Activated CD4-positive, alpha-beta memory T cell treated with anti-CD3 and anti-CD28 coated beads for 36 hours (primary cell): ENCODE measurements at regions of chr2 and their contacts with region 1.

Region 1: GRCh38 chr2:181104512-181105115 is 124.2 kb downstream of the UBE2E3 start:
- DNase-seq: no peak
- H3K4me3 Mint-ChIP-seq: no peak overlapping the region
- H3K27ac Mint-ChIP-seq: no peak overlapping the region
- H3K4me1 Mint-ChIP-seq: peaks cover 44% of the 10 kb centered on the region
- H3K27me3 Mint-ChIP-seq: no peaks in the 10 kb centered on the region

Region 2: DNA sequence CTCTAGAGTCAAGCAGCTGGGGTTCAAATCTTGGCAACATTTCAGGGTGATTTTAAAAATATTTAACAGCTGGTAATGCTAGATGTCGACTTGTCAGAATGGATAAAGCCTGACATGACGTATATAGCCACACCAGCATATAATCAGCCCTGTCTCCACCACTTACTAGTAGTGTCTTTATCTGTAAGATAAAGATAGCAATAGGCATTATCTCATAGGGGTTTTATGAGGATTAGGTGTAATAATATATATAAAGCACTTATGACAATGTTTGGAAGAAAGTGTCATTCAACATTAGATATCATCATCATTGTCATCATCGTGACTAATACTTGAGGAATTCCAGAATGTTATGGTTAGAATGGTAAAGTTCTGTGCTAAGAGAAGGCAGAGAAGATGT is 728.5 kb before region 1 on chr2:
- CTCF ChIA-PET with region 1: no interaction called
- POLR2A ChIA-PET with region 1: no interaction called
- intact Hi-C with region 1: no loop called
- DNase-seq: no peak
- H3K4me3 Mint-ChIP-seq: no peak overlapping the region
- H3K27ac Mint-ChIP-seq: no peak overlapping the region
- H3K4me1 Mint-ChIP-seq: no peaks in the 10 kb centered on the region
- H3K27me3 Mint-ChIP-seq: no peaks in the 10 kb centered on the region

Region 3: DNA sequence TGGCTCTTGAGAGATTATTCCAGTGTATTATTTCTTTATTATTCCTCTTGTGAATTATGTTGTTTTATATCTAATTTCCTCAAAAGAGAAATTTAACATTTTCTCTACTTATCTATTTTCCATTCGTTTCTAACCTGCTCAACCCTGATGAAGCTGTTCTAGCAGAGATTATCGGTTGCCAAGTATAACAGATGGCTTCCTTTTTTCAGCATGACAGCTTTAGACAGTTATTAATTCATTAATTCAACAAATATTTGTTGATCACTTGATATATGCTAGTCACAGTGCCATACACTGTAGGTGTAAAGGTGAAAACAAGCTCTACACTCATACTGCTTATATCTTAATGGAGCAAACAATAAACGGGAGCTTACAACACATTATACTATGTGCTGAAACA is 262.2 kb before region 1 on chr2:
- CTCF ChIA-PET with region 1: no interaction called
- POLR2A ChIA-PET with region 1: no interaction called
- intact Hi-C with region 1: no loop called
- DNase-seq: no peak
- H3K4me3 Mint-ChIP-seq: no peak overlapping the region
- H3K27ac Mint-ChIP-seq: no peak overlapping the region
- H3K4me1 Mint-ChIP-seq: no peaks in the 10 kb centered on the region
- H3K27me3 Mint-ChIP-seq: no peaks in the 10 kb centered on the region

Region 4: GRCh38 chr2:181117206-181117925 is 12.8 kb after region 1 on chr2:
- CTCF ChIA-PET with region 1: interaction called, 11 read pairs
- POLR2A ChIA-PET with region 1: no interaction called
- intact Hi-C with region 1: loop called (anchors 1 kb)
- DNase-seq: no peak
- H3K4me3 Mint-ChIP-seq: no peak overlapping the region
- H3K27ac Mint-ChIP-seq: no peak overlapping the region
- H3K4me1 Mint-ChIP-seq: peaks cover 37% of the 10 kb centered on the region
- H3K27me3 Mint-ChIP-seq: no peaks in the 10 kb centered on the region

Region 5: GRCh38 chr2:181165199-181165868 is 60.7 kb after region 1 on chr2:
- CTCF ChIA-PET with region 1: interaction called, 4 read pairs
- POLR2A ChIA-PET with region 1: no interaction called
- intact Hi-C with region 1: loop called (anchors 1 kb)
- DNase-seq: peak; percentile 35
- H3K4me3 Mint-ChIP-seq: peak overlapping the region; percentile 59
- H3K27ac Mint-ChIP-seq: peak overlapping the region; percentile 90
- H3K4me1 Mint-ChIP-seq: peaks cover 59% of the 10 kb centered on the region
- H3K27me3 Mint-ChIP-seq: no peaks in the 10 kb centered on the region

Region 6: DNA sequence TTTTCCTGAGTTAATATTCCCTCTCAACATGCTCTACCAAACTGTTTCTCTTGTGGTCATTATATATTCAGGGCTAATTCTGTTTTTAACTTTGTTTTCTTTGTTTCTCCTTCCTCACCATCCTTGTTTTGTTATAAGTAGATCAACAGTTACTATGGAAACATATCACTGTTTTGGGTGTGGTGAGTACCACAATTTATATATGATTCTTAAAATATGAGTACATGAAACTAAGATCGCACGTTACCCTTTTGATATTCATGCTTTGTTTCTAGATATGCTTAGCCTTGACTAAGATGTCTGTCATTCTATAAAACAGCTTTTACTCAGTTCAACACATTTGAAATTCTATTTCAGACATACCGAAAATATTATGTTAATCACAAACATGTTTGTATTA is 120.3 kb after region 1 on chr2:
- CTCF ChIA-PET with region 1: interaction called, 5 read pairs
- POLR2A ChIA-PET with region 1: no interaction called
- intact Hi-C with region 1: loop called (anchors 1 kb)
- DNase-seq: no peak
- H3K4me3 Mint-ChIP-seq: peak overlapping the region; percentile 59
- H3K27ac Mint-ChIP-seq: peak overlapping the region; percentile 87
- H3K4me1 Mint-ChIP-seq: peaks cover 24% of the 10 kb centered on the region
- H3K27me3 Mint-ChIP-seq: no peaks in the 10 kb centered on the region

Region 7: DNA sequence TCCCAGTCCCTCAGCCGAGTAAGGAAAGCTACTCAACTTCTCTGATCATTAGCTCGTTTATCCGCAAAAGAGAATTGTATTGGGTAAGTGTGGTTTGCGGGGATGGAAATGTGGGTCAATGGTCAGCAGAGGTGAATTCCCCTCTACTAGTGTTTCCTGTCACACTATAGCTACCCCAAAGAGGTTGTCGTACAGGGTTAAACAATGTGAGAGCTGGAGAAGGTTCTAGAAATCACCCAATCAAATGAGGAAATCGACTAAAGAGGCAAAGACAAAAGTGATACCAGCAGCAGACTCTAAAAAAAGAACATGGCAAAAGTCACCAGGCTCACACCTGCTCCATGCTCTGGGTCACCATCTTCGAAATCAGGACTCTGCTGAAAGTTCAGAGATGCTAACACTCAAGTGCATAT is 207.9 kb after region 1 on chr2:
- CTCF ChIA-PET with region 1: interaction called, 8 read pairs
- POLR2A ChIA-PET with region 1: no interaction called
- intact Hi-C with region 1: loop called (anchors 1 kb)
- DNase-seq: peak; percentile 68
- H3K4me3 Mint-ChIP-seq: peak overlapping the region; percentile 65
- H3K27ac Mint-ChIP-seq: peak overlapping the region; percentile 87
- H3K4me1 Mint-ChIP-seq: peaks cover 43% of the 10 kb centered on the region
- H3K27me3 Mint-ChIP-seq: no peaks in the 10 kb centered on the region

Region 8: DNA sequence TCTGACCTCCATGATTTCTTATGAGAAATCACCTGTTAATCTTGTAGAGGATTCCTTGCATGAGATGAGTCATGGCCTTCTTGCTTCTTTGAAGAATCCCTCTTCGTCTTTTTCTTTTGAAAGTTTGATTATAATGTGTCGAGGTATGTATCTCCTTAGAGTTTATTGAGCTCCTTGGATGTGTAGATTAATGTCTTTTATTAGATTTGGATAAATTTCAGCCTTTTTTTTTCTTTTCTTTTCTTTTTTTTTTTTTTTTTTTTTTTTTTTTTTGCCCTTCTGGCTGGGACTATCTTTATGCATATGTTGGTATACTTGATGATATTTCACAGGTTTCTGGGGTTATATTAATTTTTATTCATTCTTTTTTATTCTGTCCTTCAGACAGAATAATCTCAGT is 280.3 kb after region 1 on chr2:
- CTCF ChIA-PET with region 1: no interaction called
- POLR2A ChIA-PET with region 1: no interaction called
- intact Hi-C with region 1: no loop called
- DNase-seq: no peak
- H3K4me3 Mint-ChIP-seq: no peak overlapping the region
- H3K27ac Mint-ChIP-seq: no peak overlapping the region
- H3K4me1 Mint-ChIP-seq: no peaks in the 10 kb centered on the region
- H3K27me3 Mint-ChIP-seq: no peaks in the 10 kb centered on the region

Region 9: DNA sequence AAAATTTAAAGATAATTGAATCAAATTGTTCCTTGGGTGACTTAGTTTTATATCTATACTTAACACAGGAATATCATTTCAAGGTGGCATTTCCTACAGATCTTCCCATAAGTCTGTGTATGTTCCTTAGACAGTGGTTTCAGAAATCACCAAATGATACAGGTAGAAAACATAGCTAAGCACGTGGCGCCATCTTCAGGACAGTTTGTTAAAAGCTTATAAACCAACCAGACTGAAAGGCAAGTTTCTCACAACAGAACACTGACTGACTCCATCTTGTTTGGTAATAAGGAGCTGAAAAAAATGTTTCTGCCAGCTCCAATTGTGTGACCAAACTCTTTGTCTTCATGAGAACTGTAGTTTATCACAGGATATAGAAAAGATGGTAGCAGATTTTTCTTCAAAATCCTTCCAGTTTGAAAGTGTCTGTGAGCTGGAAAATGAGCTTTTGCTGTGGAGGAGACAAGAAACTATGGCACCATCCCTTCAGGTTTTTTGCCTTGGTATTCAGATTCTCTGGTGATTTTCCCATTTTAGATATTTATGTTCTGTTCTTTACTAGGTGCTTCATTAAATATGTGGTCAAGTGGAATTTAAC is 610.5 kb after region 1 on chr2:
- CTCF ChIA-PET with region 1: interaction called, 36 read pairs
- POLR2A ChIA-PET with region 1: interaction called, 3 read pairs
- intact Hi-C with region 1: loop called (anchors 1 kb)
- DNase-seq: peak; percentile 75
- H3K4me3 Mint-ChIP-seq: no peak overlapping the region
- H3K27ac Mint-ChIP-seq: no peak overlapping the region
- H3K4me1 Mint-ChIP-seq: no peaks in the 10 kb centered on the region
- H3K27me3 Mint-ChIP-seq: no peaks in the 10 kb centered on the region